Posterior cingulate gyrus (tissue), 11 donors: ENCODE measurements at regions of chrX and their contacts with region 1.

Region 1: DNA sequence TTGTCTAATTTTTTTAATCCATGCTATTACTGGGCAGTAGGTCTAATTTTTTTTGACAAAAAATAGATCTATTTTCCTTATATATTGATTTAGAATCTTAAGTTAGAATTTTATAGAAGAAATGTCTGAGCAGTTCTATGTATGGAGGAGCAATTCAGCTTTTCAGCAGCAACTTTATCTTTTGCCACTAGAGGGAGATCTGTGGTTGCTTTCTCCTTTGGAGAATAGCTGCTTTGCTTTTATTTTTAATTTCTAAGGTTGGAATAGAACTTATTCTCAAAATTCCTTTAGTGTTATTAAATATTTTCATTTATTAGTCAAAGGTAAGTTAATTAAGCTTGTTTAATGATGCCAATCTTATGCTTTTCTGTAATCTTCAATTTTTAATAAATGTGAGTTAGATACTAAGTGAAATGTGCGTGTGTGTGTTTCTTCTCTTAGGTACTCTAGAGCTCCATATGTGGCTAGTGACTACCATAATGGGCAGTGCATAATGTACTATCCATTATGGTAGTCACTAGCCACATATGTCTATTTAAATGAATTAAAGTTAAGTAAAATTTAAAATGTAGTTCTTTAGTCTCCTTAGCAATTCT is 29.3 kb downstream of the FAM199X start:
- DNase-seq: no peak

Region 2: DNA sequence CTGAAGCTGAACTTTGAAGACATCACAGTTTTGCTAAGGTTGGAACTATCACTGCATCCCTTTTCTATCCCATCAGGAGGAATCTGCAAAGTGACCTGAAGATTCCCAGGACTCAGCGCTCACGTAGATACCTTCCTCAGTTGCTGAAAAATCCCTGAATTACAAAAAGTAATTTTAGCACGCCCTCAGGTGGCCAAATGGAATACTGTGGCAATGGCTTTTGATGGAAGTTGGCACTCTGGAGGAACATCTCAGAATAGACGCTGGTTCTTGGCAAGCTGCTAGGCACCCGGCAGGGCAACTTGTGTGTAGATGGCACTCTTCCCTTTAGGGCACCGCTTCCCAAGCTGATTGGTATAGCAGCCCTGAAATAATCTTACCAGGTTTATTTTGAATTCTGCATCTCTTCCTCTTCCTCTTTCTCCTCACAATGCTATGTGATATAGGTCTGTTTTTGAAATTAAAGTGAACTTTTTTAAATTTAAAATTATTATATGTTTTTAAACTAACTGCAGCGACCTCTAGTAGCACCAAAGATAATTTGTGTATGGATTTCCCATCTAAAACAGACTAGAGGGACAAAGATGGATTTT is 75.4 kb after region 1 on chrX:
- intact Hi-C with region 1: loop called (anchors 5 kb)
- DNase-seq: peak in 9 of 10 donors; percentile 21 to 85 (median 54)